Activated B cell treated with CpG ODN at 0.5 μM for 24 hours (primary cell): ENCODE measurements at regions of chr1 and their contacts with region 1.

Region 1: DNA sequence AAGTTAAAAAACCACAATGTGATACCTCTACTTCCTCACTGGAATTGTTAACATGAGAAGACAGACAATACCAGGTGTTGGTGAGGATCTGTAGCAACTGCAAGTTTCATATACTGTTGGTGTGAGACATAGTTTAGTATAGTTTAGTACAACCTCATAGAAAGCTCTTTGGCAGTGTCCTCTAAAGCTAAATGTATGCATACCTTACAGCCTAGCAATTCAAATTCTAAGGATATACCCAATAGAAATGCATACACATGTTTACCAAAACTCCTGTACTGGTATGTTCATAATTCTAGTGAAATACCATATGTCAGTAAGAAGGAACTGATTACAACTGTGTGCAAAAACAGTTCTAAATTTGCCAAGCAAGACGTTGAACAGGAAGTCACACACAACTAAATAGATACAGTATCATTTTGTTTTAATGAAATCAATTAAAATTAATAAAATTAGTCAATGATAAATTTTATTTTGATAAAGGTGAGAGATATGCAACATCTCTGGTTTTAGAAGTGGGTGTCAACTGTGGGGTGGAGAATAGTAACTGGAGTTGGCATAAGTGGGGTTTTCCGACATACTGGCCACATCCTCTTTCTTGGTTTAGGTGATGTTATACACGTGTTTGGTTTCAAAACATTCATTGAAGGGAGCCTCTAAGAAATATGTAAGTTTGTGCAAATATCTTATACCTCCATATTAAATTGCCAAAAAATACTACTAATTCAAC is 450.7 kb downstream of the PTPRC start:
- DNase-seq: no peak
- ATAC-seq: peak; percentile 97
- H3K4me3 Mint-ChIP-seq: no peak overlapping the region
- H3K27ac Mint-ChIP-seq: peak overlapping the region; percentile 71
- H3K4me1 Mint-ChIP-seq: peaks cover 31% of the 10 kb centered on the region
- H3K27me3 Mint-ChIP-seq: no peaks in the 10 kb centered on the region
- CTCF ChIP-seq: no peak

Region 2: DNA sequence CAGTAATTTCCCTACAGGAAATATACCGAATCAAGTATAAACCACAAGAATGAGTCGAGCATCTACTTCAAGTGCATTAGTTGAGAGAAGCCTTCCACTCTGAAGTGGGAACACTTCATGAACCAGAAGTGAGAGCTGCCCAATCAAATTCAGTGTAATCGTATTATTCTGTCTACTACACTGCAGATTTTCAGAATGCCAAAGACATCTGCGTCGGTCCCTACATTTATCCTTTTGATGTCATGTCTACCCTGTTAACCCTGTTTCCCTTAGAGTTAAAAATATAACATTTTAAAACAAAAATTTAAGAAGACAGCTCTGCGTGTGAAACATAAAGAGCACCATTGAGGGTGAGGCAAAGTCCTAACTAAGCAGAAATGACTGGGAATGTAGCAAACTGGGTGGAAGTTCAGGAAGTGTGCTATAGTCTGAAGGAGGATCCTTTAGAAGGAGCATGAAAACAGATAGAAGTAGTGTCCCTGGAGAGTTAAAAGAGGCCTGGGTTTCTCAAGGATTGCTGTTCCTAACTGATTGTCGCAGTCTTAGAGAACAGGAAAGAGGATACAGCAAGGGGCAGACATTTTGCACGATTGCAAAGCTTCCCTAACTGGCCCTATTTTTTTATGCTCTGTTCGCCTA is 159.5 kb before region 1 on chr1:
- CTCF ChIA-PET with region 1: no interaction called
- POLR2A ChIA-PET with region 1: no interaction called
- intact Hi-C with region 1: loop called (anchors 5 kb)
- DNase-seq: no peak
- ATAC-seq: peak; percentile 67
- H3K4me3 Mint-ChIP-seq: peak overlapping the region; percentile 74
- H3K27ac Mint-ChIP-seq: peak overlapping the region; percentile 69
- H3K4me1 Mint-ChIP-seq: peaks cover 47% of the 10 kb centered on the region
- H3K27me3 Mint-ChIP-seq: peaks cover 2% of the 10 kb centered on the region
- CTCF ChIP-seq: no peak

Region 3: GRCh38 chr1:199073166-199073565 is 16.4 kb before region 1 on chr1:
- CTCF ChIA-PET with region 1: no interaction called
- POLR2A ChIA-PET with region 1: no interaction called
- intact Hi-C with region 1: loop called (anchors 2 kb)
- DNase-seq: no peak
- ATAC-seq: no peak
- H3K4me3 Mint-ChIP-seq: no peak overlapping the region
- H3K27ac Mint-ChIP-seq: no peak overlapping the region
- H3K4me1 Mint-ChIP-seq: no peaks in the 10 kb centered on the region
- H3K27me3 Mint-ChIP-seq: no peaks in the 10 kb centered on the region
- CTCF ChIP-seq: no peak

Region 4: DNA sequence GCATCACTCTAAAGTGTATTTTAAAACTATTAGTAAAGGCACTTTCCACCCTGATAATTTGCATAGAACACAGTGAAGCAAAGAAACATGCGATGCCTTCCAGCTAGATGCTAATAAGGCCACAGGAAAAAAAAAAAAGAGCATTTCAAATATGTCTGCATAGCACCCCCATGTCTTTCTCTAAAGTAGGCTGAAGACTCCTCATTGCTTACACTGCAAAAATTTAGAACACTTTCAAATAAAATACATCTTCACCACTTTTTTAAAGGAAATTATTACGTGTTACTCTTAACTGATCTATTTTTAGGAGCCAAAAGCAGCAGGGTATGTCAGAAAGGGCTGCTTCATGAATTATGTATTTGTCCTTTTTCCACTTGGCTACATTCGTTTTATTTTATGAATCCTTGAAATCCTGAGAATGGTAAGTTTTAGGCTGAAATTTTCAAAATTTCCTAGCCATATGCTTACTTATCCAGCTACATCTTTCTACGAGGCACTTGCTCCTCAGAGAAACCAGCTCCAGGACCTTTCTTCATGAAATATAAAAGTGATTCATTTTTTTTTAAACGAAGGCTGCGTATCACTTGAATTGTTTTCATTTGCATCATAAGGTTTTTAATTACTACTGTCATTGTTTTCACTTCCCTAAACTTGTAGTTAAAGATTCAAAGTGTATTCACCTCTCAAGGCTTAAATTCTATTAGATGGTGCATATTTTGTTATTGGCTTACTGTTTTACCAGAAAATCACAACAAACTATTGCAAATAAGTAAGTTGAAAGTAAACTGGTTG is 62.3 kb after region 1 on chr1:
- CTCF ChIA-PET with region 1: no interaction called
- POLR2A ChIA-PET with region 1: no interaction called
- intact Hi-C with region 1: loop called (anchors 5 kb)
- DNase-seq: no peak
- ATAC-seq: peak; percentile 62
- H3K4me3 Mint-ChIP-seq: peak overlapping the region; percentile 17
- H3K27ac Mint-ChIP-seq: no peak overlapping the region
- H3K4me1 Mint-ChIP-seq: peaks cover 18% of the 10 kb centered on the region
- H3K27me3 Mint-ChIP-seq: peaks cover 41% of the 10 kb centered on the region
- CTCF ChIP-seq: no peak

Region 5: DNA sequence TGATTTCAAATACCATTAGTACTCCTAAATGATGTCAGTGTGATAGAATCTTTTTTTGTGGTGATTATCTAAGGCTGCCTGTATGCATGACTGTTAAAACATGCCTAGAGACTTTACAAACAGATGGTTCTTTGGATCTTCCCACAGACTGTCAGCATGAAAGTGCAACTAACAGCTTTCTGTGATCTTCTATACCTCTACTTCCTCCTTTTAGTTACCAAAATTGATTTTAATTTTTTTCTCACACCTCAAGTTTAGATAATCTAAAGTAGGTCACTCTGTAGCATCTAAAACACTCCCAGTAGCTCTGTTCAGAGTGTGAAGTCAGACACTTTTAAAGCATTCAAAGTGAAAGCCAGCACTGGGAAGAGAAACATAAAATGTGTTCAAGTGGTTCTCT is 83.8 kb after region 1 on chr1:
- CTCF ChIA-PET with region 1: no interaction called
- POLR2A ChIA-PET with region 1: no interaction called
- intact Hi-C with region 1: no loop called
- DNase-seq: no peak
- ATAC-seq: peak; percentile 70
- H3K4me3 Mint-ChIP-seq: no peak overlapping the region
- H3K27ac Mint-ChIP-seq: no peak overlapping the region
- H3K4me1 Mint-ChIP-seq: peaks cover 31% of the 10 kb centered on the region
- H3K27me3 Mint-ChIP-seq: peaks cover 8% of the 10 kb centered on the region
- CTCF ChIP-seq: no peak